ENCODE measurements at regions of chr3 and their contacts with region 1.

Region 1: GRCh38 chr3:142028243-142028777 is 121.0 kb downstream of the TFDP2 start:
- DNase-seq: peak in 5 of 9 experiments; percentile 14 to 77 (median 28)
- ATAC-seq: peak; percentile 88
- H3K4me3 ChIP-seq: peak overlapping the region; percentile 44 to 55
- H3K4me3 Mint-ChIP-seq: peak overlapping the region; percentile 85
- H3K27ac ChIP-seq: no peak overlapping the region
- H3K27ac Mint-ChIP-seq: peak overlapping the region; percentile 69
- H3K4me1 ChIP-seq: peaks cover 6% of the 10 kb centered on the region
- H3K4me1 Mint-ChIP-seq: peaks cover 14% of the 10 kb centered on the region
- H3K27me3 ChIP-seq: no peaks in the 10 kb centered on the region
- H3K27me3 Mint-ChIP-seq: no peaks in the 10 kb centered on the region
- CTCF ChIP-seq: no peak

Region 2: DNA sequence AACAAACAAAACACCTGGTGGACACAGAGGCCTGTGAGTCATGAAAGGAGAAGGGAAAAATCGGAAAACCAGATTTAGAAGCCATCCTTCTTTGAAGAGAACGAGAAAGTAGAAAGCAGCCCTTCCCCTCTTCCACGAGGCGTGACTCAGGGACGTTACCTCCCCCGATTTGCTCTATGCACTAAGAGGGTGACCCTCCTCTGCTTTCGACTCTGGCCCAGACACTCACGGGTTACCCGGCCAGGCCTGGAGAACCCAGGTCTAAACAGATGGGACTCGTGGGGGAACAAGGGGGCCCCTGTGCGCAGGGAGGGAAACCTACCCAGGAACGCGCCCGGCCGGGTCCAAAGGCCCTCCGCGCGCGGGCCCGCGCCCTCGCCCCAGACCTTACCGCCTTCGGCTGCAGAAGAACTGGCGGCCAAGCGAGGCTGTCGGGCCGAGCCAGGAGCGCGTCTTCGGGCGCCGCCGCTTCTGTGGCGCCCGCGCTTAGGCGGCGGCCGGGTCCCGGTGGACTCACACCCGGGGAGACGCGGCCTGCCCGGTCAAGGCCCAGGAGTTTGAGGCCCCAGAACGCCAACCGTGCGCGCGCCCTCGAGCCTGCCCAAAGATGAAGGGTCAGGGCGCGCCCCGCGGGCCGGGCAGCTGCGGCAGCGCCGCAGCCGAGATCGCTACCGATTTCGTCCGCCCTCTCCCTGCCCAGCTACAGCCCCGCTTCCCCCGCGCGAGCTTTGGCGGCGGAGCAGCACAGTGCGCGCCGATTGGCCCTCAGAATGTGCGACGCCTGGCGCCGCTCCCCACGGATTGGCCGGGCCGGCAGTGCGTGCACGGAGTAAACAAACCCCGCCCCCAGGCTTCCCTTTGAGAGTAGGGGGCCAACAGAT is 120.7 kb after region 1 on chr3 and contains the start of gene TFDP2:
- CTCF ChIA-PET with region 1: no interaction called
- POLR2A ChIA-PET with region 1: no interaction called
- intact Hi-C with region 1: loop called in 1 of 2 experiments (anchors 5 kb)
- DNase-seq: peak; percentile 68 to 92 (median 85)
- ATAC-seq: peak; percentile 98
- H3K4me3 ChIP-seq: peak within 1 kb of the TSS; percentile 69 to 74
- H3K4me3 Mint-ChIP-seq: peak within 1 kb of the TSS; percentile 89
- H3K27ac ChIP-seq: peak within 1 kb of the TSS; percentile 67 to 73
- H3K27ac Mint-ChIP-seq: peak within 1 kb of the TSS; percentile 85
- H3K4me1 ChIP-seq: peaks cover 17% of the 10 kb centered on the region
- H3K4me1 Mint-ChIP-seq: peaks cover 32% of the 10 kb centered on the region
- H3K27me3 ChIP-seq: no peaks in the 10 kb centered on the region
- H3K27me3 Mint-ChIP-seq: no peaks in the 10 kb centered on the region
- CTCF ChIP-seq: no peak
- total RNA-seq, gene TFDP2: 37.0 to 43.0 TPM